ENCODE measurements at regions of chr5 and their contacts with region 1.

Region 1: GRCh38 chr5:180126726-180127681 is 55.4 kb upstream of the RNF130 start:
- DNase-seq: peak in 11 of 35 experiments; percentile 7 to 41 (median 29)
- ATAC-seq: peak in 3 of 4 experiments; percentile 34 to 54 (median 45)
- H3K4me3 ChIP-seq: no peak overlapping the region
- H3K4me3 Mint-ChIP-seq: no peak overlapping the region
- H3K27ac ChIP-seq: no peak overlapping the region
- H3K27ac Mint-ChIP-seq: no peak overlapping the region
- H3K4me1 ChIP-seq: no peaks in the 10 kb centered on the region
- H3K4me1 Mint-ChIP-seq: no peaks in the 10 kb centered on the region
- H3K27me3 ChIP-seq: peaks cover 0 to 17% of the 10 kb centered on the region in 2 experiments
- H3K27me3 Mint-ChIP-seq: peaks cover 9 to 15% of the 10 kb centered on the region in 2 donors

Region 2: DNA sequence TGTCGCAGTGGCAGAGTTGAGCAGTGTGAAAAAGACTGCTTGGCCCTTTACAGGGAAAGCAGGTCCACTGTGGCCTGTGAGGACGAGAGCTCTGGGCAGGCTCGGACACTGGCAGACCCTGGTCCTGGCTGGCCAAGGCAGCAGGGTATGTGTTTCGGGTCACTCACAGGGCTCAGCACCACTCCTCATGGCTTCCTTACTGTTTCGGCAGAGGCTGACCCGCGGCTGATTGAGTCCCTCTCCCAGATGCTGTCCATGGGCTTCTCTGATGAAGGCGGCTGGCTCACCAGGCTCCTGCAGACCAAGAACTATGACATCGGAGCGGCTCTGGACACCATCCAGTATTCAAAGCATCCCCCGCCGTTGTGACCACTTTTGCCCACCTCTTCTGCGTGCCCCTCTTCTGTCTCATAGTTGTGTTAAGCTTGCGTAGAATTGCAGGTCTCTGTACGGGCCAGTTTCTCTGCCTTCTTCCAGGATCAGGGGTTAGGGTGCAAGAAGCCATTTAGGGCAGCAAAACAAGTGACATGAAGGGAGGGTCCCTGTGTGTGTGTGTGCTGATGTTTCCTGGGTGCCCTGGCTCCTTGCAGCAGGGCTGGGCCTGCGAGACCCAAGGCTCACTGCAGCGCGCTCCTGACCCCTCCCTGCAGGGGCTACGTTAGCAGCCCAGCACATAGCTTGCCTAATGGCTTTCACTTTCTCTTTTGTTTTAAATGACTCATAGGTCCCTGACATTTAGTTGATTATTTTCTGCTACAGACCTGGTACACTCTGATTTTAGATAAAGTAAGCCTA is 290.6 kb before region 1 on chr5:
- CTCF ChIA-PET with region 1: no interaction called
- POLR2A ChIA-PET with region 1: no interaction called
- DNase-seq: peak in 32 of 35 experiments; percentile 32 to 75 (median 52)
- ATAC-seq: peak; percentile 82 to 91 (median 87)
- H3K4me3 ChIP-seq: no peak overlapping the region
- H3K4me3 Mint-ChIP-seq: peak overlapping the region; percentile 2 to 59 (median 29)
- H3K27ac ChIP-seq: peak overlapping the region; percentile 77
- H3K27ac Mint-ChIP-seq: peak overlapping the region; percentile 91 to 94
- H3K4me1 ChIP-seq: peaks cover 0 to 21% of the 10 kb centered on the region in 2 experiments
- H3K4me1 Mint-ChIP-seq: peaks cover 17 to 28% (median 26%) of the 10 kb centered on the region in 3 donors
- H3K27me3 ChIP-seq: no peaks in the 10 kb centered on the region
- H3K27me3 Mint-ChIP-seq: no peaks in the 10 kb centered on the region

Region 3: DNA sequence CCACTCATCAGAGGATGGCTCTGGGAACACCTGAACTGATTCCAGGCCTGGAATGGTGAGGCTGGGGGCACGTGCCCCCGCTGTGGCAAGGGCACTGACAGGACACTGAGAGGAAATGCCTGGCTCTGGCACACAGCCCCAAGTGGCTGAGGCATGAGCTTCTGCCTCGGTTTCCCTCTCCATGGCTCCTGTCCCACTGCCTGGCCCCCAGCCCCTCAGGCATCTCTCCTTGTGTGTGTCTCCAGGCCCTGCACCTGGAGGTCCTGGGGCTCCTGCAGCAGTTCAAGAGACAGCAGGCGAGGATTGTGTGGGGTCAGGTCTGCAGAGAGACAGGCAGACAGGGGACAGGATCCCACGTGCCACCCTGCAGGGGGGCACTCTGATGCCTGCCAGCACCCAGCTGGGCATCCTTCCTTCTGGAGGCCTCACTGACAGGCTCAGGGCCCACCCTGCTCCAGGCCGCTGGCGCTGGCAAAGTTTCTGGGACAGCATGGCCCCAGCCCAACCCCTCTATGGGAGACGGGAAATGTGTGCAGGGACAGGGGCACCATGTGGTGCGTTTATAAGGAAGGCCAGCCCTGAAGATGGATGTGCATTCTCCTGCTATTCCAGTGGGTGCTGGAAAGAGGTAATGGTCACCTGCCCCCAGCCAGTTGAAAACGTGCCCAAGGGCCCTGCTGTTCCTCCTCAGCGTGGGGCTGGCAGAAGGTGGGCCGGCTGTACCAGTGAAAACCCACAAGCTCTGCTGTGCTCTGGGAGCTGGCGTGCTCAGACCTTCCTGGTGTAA is 16.0 kb after region 1 on chr5:
- CTCF ChIA-PET with region 1: no interaction called
- POLR2A ChIA-PET with region 1: no interaction called
- DNase-seq: peak in 1 of 35 experiments; percentile 4
- ATAC-seq: no peak
- H3K4me3 ChIP-seq: no peak overlapping the region
- H3K4me3 Mint-ChIP-seq: no peak overlapping the region
- H3K27ac ChIP-seq: no peak overlapping the region
- H3K27ac Mint-ChIP-seq: no peak overlapping the region
- H3K4me1 ChIP-seq: no peaks in the 10 kb centered on the region
- H3K4me1 Mint-ChIP-seq: no peaks in the 10 kb centered on the region
- H3K27me3 ChIP-seq: peaks cover 0 to 35% of the 10 kb centered on the region in 2 experiments
- H3K27me3 Mint-ChIP-seq: peaks cover 27% of the 10 kb centered on the region in 2 donors

Region 4: GRCh38 chr5:180507661-180508060 is 380.7 kb after region 1 on chr5:
- CTCF ChIA-PET with region 1: no interaction called
- POLR2A ChIA-PET with region 1: interaction called in 1 of 2 experiments, 13 read pairs
- DNase-seq: no peak
- ATAC-seq: no peak
- H3K4me3 ChIP-seq: no peak overlapping the region
- H3K4me3 Mint-ChIP-seq: no peak overlapping the region
- H3K27ac ChIP-seq: no peak overlapping the region
- H3K27ac Mint-ChIP-seq: no peak overlapping the region
- H3K4me1 ChIP-seq: peaks cover 2 to 7% of the 10 kb centered on the region in 2 experiments
- H3K4me1 Mint-ChIP-seq: peaks cover 42 to 49% (median 43%) of the 10 kb centered on the region in 3 donors
- H3K27me3 ChIP-seq: no peaks in the 10 kb centered on the region
- H3K27me3 Mint-ChIP-seq: no peaks in the 10 kb centered on the region